ENCODE measurements at regions of chr17 and their contacts with region 1.

Region 1: GRCh38 chr17:4789901-4790704 is 1.3 kb downstream of the GLTPD2 start:
- DNase-seq: peak; percentile 83 to 90 (median 85)
- H3K4me3 ChIP-seq: peak overlapping the region in 3 of 4 donors; percentile 15 to 57 (median 44)
- H3K27ac ChIP-seq: peak overlapping the region; percentile 78 to 98 (median 96)
- H3K4me1 ChIP-seq: peaks cover 4 to 44% of the 10 kb centered on the region in 2 donors
- H3K27me3 ChIP-seq: peaks cover 6% of the 10 kb centered on the region
- CTCF ChIP-seq: peak; percentile 34 to 96 (median 68)
- POLR2A ChIP-seq: peak; percentile 87 to 92

Region 2: GRCh38 chr17:4709794-4710692 is 80.1 kb before region 1 on chr17 and contains the start of gene ARRB2:
- intact Hi-C with region 1: loop called in 1 of 2 experiments (anchors 10 kb)
- DNase-seq: peak; percentile 97 to 99 (median 99)
- H3K4me3 ChIP-seq: peak within 1 kb of the TSS; percentile 13 to 85 (median 56)
- H3K27ac ChIP-seq: peak within 1 kb of the TSS; percentile 68 to 94 (median 81)
- H3K4me1 ChIP-seq: peaks cover 11% of the 10 kb centered on the region in 2 donors
- H3K27me3 ChIP-seq: no peaks in the 10 kb centered on the region
- CTCF ChIP-seq: peak; percentile 39 to 89 (median 80)
- POLR2A ChIP-seq: peak in 1 of 2 donors; percentile 62
- total RNA-seq, gene ARRB2: 14.6 to 99.1 (median 55.0) TPM

Region 3: DNA sequence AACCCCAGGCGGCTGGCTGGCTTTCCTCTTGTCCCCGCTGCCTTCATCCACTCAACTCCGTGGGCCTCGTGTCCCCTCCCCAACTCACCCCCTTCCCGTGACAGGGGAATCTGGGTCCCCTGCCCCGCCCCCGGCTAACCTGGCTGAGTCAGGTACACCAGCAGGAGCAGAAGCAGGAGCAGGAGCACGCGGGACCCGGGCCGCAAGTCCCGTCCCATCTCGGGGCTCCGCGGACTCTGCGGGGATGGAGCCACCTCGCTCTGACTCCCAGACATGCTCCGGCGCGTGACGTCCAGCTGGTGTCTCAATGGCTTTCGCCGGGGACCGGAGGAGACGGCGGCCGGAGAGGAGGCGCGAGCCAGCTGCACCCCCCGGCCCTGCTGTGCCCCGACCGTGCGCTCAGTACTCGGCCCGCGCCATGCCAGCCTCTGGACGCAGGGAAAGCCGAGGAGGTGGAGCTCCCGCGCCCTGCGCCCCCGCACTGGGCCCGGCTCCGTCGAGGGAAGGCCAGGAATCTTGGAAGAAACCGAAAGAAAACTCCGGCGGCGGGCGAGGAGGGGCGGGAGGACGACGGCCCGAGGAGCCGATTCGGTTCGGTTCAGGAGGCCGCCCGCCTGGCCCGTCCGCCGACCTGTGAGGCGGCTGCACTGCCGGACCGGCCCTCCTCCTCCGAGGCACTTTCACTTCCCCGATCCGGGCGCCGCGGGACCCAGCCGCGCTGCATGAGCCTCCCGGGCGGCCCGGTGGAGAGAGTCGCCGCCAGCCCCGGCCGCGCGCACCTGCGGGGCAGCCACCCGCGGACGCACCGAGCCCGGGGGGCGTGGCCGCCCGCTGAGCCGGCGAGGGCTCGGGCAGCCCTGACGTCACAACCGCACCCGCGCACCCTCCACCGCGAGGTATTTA is 50.7 kb before region 1 on chr17 and contains the starts of genes CXCL16 and ZMYND15:
- intact Hi-C with region 1: loop called in 1 of 2 experiments (anchors 10 kb)
- DNase-seq: peak; percentile 57 to 77 (median 68)
- H3K4me3 ChIP-seq: peak within 1 kb of the TSS in 3 of 4 donors; percentile 56 to 94 (median 91)
- H3K27ac ChIP-seq: peak within 1 kb of the TSS in 4 of 5 donors; percentile 55 to 85 (median 77)
- H3K4me1 ChIP-seq: peaks cover 6 to 13% of the 10 kb centered on the region in 2 donors
- H3K27me3 ChIP-seq: peaks cover 6% of the 10 kb centered on the region
- CTCF ChIP-seq: no peak
- POLR2A ChIP-seq: peak in 1 of 2 donors; percentile 46
- total RNA-seq, gene CXCL16: 2.4 to 50.1 (median 38.2) TPM
- total RNA-seq, gene ZMYND15: 0.18 to 3.2 (median 1.5) TPM

Region 4: GRCh38 chr17:4891411-4892342 is 101.6 kb after region 1 on chr17:
- intact Hi-C with region 1: loop called (anchors 2 kb)
- DNase-seq: no peak
- H3K4me3 ChIP-seq: no peak overlapping the region
- H3K27ac ChIP-seq: no peak overlapping the region
- H3K4me1 ChIP-seq: no peaks in the 10 kb centered on the region
- H3K27me3 ChIP-seq: no peaks in the 10 kb centered on the region
- CTCF ChIP-seq: no peak
- POLR2A ChIP-seq: no peak

Measured in adrenal gland (tissue), 19 donors.